Calu3 (cell line): ENCODE measurements at regions of chr20 and their contacts with region 1.

Region 1: DNA sequence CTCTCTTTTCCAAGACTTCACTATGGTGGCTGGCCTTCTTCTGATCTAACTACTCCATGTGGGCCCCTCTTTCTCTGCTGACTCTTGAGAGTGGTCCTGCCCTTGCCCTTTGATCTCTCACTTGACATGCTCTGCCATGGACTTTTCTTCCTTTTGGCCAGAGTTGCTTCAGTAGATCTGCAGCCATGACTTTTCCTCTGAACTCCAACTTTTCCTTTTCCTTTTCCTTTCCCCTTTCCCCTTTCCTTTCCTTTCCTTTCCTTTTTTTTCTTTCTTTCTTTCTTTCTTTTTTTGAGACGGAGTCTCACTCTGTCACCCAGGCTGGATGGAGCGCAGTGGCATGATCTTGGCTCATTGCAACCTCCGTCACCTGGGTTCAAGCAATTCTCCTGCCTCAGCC is 88.5 kb downstream of the JAG1 start:
- DNase-seq: no peak
- H3K4me3 Mint-ChIP-seq: no peak overlapping the region
- H3K27ac Mint-ChIP-seq: no peak overlapping the region
- H3K4me1 Mint-ChIP-seq: peaks cover 2% of the 10 kb centered on the region
- H3K27me3 Mint-ChIP-seq: no peaks in the 10 kb centered on the region
- CTCF ChIP-seq: no peak

Region 2: GRCh38 chr20:10611357-10611756 is 26.0 kb after region 1 on chr20:
- CTCF ChIA-PET with region 1: no interaction called
- intact Hi-C with region 1: no loop called
- DNase-seq: peak; percentile 14
- H3K4me3 Mint-ChIP-seq: no peak overlapping the region
- H3K27ac Mint-ChIP-seq: no peak overlapping the region
- H3K4me1 Mint-ChIP-seq: no peaks in the 10 kb centered on the region
- H3K27me3 Mint-ChIP-seq: no peaks in the 10 kb centered on the region
- CTCF ChIP-seq: no peak

Region 3: GRCh38 chr20:11454966-11455799 is 869.9 kb after region 1 on chr20:
- CTCF ChIA-PET with region 1: interaction called, 15 read pairs
- intact Hi-C with region 1: no loop called
- DNase-seq: peak; percentile 19
- H3K4me3 Mint-ChIP-seq: peak overlapping the region; percentile 29
- H3K27ac Mint-ChIP-seq: peak overlapping the region; percentile 90
- H3K4me1 Mint-ChIP-seq: peaks cover 43% of the 10 kb centered on the region
- H3K27me3 Mint-ChIP-seq: no peaks in the 10 kb centered on the region
- CTCF ChIP-seq: no peak